T-cell (primary cell): ENCODE measurements at regions of chr1 and their contacts with region 1.

Region 1: DNA sequence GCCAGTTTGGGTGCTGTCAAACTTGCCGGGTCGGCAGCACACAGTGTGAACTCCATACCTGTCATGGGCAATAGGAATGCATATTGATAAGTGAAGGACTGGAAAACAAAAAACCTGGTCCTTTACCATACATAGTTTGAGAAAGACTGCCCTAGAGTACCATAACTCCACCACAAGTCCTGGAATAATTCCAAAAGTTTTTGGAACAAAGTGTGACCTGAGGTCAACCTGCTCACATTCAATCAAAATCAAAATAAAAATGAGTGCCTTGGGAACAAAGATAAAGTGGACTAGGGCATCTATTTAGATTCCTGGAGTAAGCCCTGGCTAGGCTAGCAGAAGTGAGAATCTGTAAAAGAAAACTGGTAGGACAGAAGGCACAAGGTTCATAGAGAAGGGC is 7.6 kb downstream of the PEX19 start:
- DNase-seq: no peak
- ATAC-seq: no peak
- H3K4me3 ChIP-seq: no peak overlapping the region
- H3K4me3 Mint-ChIP-seq: no peak overlapping the region
- H3K27ac ChIP-seq: no peak overlapping the region
- H3K27ac Mint-ChIP-seq: no peak overlapping the region
- H3K4me1 ChIP-seq: no peaks in the 10 kb centered on the region
- H3K4me1 Mint-ChIP-seq: peaks cover 0 to 2% (median 2%) of the 10 kb centered on the region in 3 donors
- H3K27me3 ChIP-seq: no peaks in the 10 kb centered on the region
- H3K27me3 Mint-ChIP-seq: no peaks in the 10 kb centered on the region

Region 2: GRCh38 chr1:160338580-160338979 is 61.2 kb after region 1 on chr1:
- CTCF ChIA-PET with region 1: no interaction called
- POLR2A ChIA-PET with region 1: no interaction called
- DNase-seq: no peak
- ATAC-seq: no peak
- H3K4me3 ChIP-seq: no peak overlapping the region
- H3K4me3 Mint-ChIP-seq: no peak overlapping the region
- H3K27ac ChIP-seq: no peak overlapping the region
- H3K27ac Mint-ChIP-seq: peak overlapping the region in 1 of 2 donors; percentile 0
- H3K4me1 ChIP-seq: peaks cover 6 to 14% of the 10 kb centered on the region in 2 experiments
- H3K4me1 Mint-ChIP-seq: peaks cover 41 to 49% (median 48%) of the 10 kb centered on the region in 3 donors
- H3K27me3 ChIP-seq: no peaks in the 10 kb centered on the region
- H3K27me3 Mint-ChIP-seq: no peaks in the 10 kb centered on the region

Region 3: DNA sequence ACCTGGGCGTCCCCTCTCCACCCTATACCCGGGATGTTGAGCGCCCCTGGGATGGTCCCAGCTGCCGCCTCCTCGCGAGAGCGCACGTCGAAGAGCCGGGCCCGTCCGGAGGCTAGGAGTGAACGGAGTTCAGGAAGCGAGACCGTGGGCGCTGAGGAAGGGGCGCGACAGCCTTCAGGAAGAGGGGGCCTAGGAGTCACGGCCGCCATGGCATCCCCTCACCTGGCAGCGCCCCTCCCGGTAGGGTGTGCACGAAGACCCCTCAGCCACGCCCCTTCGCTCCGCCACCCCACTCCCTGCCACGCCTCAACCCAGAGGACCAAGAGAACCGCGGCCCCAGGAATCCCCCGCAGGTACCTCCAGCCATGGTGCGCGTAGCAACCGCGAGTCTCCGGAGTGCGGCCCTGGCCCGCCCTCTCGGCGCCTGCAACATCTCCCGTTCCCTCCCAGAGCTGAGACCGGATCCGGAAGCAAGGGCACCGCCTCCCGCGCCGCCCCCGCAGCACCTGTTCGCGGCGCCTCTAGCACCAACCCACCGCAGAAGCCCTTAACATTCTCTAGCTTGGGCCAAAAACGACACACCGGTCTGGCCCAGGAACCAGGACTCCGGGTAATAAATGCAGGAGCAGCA is 761.3 kb after region 1 on chr1 and contains the start of gene TSTD1:
- CTCF ChIA-PET with region 1: no interaction called
- POLR2A ChIA-PET with region 1: interaction called in 1 of 2 experiments, 17 read pairs
- DNase-seq: peak; percentile 77 to 94 (median 87)
- ATAC-seq: peak; percentile 87 to 94 (median 92)
- H3K4me3 ChIP-seq: peak within 1 kb of the TSS; percentile 70 to 95
- H3K4me3 Mint-ChIP-seq: peak within 1 kb of the TSS; percentile 88 to 90 (median 89)
- H3K27ac ChIP-seq: peak within 1 kb of the TSS; percentile 76
- H3K27ac Mint-ChIP-seq: peak within 1 kb of the TSS; percentile 95
- H3K4me1 ChIP-seq: peaks cover 16 to 42% of the 10 kb centered on the region in 2 experiments
- H3K4me1 Mint-ChIP-seq: peaks cover 40 to 51% (median 51%) of the 10 kb centered on the region in 3 donors
- H3K27me3 ChIP-seq: no peaks in the 10 kb centered on the region
- H3K27me3 Mint-ChIP-seq: no peaks in the 10 kb centered on the region
- total RNA-seq, gene TSTD1: 39.9 to 130 (median 94.8) TPM